ENCODE measurements at regions of chr12 and their contacts with region 1.

Region 1: GRCh38 chr12:52650520-52651081 is 1.4 kb downstream of the KRT2 start:
- DNase-seq: no peak
- H3K4me3 ChIP-seq: no peak overlapping the region
- H3K27ac ChIP-seq: peak overlapping the region in 1 of 4 donors; percentile 18
- H3K4me1 ChIP-seq: peaks cover 0 to 10% (median 3%) of the 10 kb centered on the region in 4 donors
- H3K27me3 ChIP-seq: peaks cover 14% of the 10 kb centered on the region
- CTCF ChIP-seq: no peak
- EP300 ChIP-seq: no peak
- POLR2A ChIP-seq: no peak

Region 2: DNA sequence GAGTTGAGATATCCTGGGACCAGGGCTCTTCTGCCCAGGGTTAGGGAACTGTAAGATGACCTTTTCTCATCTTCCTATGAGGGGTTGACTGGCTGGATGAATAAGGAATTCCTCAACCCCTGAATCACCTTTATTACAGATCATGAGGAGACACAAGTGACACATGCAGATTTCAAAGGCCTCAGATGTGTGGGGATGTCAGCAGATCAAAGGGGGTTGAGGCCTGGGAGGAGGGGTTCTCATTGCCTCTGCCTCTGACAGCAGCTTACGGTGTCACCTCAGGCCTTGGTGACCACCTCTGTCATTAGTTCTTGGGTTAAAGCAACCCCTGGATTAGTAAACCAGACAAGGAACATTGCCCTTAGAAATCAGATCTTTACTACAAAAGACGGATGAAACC is 47.3 kb before region 1 on chr12:
- in situ Hi-C with region 1: no loop called
- intact Hi-C with region 1: no loop called
- DNase-seq: no peak
- H3K4me3 ChIP-seq: no peak overlapping the region
- H3K27ac ChIP-seq: no peak overlapping the region
- H3K4me1 ChIP-seq: no peaks in the 10 kb centered on the region
- H3K27me3 ChIP-seq: peaks cover 43% of the 10 kb centered on the region
- CTCF ChIP-seq: no peak
- EP300 ChIP-seq: no peak
- POLR2A ChIP-seq: no peak

Region 3: DNA sequence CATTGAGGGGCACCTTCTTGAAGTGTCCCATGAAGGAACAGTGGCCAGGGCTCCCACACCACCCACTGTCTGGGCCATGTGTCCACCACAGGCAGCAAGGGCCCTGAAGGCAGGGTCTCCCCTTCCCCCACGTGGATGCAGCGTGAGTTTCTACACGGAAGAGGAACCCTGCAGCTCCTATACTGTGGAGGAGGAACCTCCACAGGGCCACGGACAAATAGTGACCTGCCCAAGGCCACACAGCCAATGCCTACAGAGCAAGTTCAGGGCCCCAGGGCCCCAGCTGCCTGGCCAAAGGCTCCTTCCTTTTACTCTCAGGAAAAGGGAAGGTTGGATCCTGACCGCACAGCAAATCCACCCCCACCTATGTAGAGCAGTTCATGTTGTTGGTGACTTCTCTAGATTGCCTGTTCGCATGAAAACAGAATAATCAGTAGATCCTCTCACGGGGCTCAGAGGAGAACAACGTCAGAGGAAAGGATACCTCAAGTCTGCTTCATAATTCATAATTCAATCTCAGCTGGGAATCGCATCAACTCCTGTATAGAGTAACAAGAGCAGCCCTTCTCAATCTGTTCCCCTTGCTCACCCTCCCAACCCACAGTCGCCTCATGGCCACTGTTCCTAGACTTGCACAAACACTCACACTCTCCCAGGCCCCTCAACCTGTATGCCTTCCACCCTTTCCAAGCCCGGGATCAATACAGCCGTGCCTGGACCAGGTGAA is 21.2 kb before region 1 on chr12:
- in situ Hi-C with region 1: no loop called
- intact Hi-C with region 1: loop called (anchors 1 kb)
- DNase-seq: no peak
- H3K4me3 ChIP-seq: no peak overlapping the region
- H3K27ac ChIP-seq: no peak overlapping the region
- H3K4me1 ChIP-seq: no peaks in the 10 kb centered on the region
- H3K27me3 ChIP-seq: no peaks in the 10 kb centered on the region
- CTCF ChIP-seq: no peak
- EP300 ChIP-seq: no peak
- POLR2A ChIP-seq: no peak

Region 4: DNA sequence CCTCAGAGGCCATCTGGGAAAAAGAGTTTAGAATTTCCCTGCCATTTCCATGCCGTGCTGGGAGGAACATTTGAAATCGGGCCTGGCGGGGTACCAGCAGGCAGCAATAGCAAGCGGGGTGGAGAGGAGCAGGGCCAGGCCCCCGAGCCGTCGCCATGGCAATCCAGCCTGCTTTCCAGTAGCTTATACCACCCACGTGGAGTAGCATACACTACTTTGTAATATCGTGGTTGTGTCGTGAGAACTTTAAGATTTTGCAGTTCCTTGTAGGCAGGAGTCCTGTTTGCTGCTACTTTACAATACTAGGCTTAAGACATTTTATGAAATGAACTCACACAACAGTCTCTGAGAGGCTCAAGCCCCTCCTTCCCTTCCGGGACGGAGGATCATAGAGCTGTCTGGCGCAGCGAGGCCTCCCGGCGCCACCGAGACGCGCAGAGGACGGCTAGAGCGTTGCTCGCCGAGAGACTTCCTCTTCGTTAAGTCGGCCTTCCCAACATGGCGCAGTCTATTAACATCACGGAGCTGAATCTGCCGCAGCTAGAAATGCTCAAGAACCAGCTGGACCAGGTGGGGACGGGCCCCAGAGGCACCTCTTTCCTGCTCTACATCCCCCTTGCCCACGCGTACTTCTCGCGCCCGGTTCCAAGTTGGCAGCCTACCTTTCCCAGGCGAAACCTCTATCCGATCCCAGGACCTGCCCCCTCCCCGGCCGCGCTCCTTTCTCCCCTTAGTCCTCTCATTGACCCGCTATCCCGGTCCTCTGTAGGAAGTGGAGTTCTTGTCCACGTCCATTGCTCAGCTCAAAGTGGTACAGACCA is 644.7 kb after region 1 on chr12 and contains the start of gene PFDN5:
- in situ Hi-C with region 1: no loop called
- intact Hi-C with region 1: no loop called
- DNase-seq: peak; percentile 92
- H3K4me3 ChIP-seq: peak within 1 kb of the TSS; percentile 38 to 84 (median 68)
- H3K27ac ChIP-seq: peak within 1 kb of the TSS; percentile 85 to 93 (median 87)
- H3K4me1 ChIP-seq: peaks cover 9 to 41% (median 24%) of the 10 kb centered on the region in 4 donors
- H3K27me3 ChIP-seq: no peaks in the 10 kb centered on the region
- CTCF ChIP-seq: peak in 2 of 5 experiments; percentile 40 to 51
- EP300 ChIP-seq: no peak
- POLR2A ChIP-seq: peak; percentile 81
- total RNA-seq, gene PFDN5: 244 to 451 (median 381) TPM

Measured in transverse colon (tissue), 4 donors.